Gastrocnemius medialis (tissue), 4 donors: ENCODE measurements at regions of chr1 and their contacts with region 1.

Region 1: GRCh38 chr1:206808615-206809014 is 36.3 kb upstream of the IL10 start:
- DNase-seq: peak in 1 of 2 donors; percentile 17
- ATAC-seq: peak; percentile 63 to 75
- H3K4me3 ChIP-seq: no peak overlapping the region
- H3K27ac ChIP-seq: no peak overlapping the region
- H3K4me1 ChIP-seq: no peaks in the 10 kb centered on the region
- H3K27me3 ChIP-seq: no peaks in the 10 kb centered on the region
- CTCF ChIP-seq: peak in 4 of 5 experiments; percentile 34 to 54 (median 45)
- POLR2A ChIP-seq: no peak

Region 2: GRCh38 chr1:206658264-206658980 is 150.2 kb before region 1 on chr1:
- in situ Hi-C with region 1: loop called in 3 of 4 experiments (anchors 10 to 25 kb)
- intact Hi-C with region 1: loop called (anchors 1 kb)
- DNase-seq: peak; percentile 43 to 82
- ATAC-seq: peak; percentile 46 to 77
- H3K4me3 ChIP-seq: peak overlapping the region; percentile 42 to 53 (median 44)
- H3K27ac ChIP-seq: peak overlapping the region; percentile 90 to 97 (median 94)
- H3K4me1 ChIP-seq: peaks cover 28 to 56% of the 10 kb centered on the region in 2 donors
- H3K27me3 ChIP-seq: no peaks in the 10 kb centered on the region
- CTCF ChIP-seq: peak; percentile 91 to 96 (median 95)
- POLR2A ChIP-seq: no peak

Region 3: DNA sequence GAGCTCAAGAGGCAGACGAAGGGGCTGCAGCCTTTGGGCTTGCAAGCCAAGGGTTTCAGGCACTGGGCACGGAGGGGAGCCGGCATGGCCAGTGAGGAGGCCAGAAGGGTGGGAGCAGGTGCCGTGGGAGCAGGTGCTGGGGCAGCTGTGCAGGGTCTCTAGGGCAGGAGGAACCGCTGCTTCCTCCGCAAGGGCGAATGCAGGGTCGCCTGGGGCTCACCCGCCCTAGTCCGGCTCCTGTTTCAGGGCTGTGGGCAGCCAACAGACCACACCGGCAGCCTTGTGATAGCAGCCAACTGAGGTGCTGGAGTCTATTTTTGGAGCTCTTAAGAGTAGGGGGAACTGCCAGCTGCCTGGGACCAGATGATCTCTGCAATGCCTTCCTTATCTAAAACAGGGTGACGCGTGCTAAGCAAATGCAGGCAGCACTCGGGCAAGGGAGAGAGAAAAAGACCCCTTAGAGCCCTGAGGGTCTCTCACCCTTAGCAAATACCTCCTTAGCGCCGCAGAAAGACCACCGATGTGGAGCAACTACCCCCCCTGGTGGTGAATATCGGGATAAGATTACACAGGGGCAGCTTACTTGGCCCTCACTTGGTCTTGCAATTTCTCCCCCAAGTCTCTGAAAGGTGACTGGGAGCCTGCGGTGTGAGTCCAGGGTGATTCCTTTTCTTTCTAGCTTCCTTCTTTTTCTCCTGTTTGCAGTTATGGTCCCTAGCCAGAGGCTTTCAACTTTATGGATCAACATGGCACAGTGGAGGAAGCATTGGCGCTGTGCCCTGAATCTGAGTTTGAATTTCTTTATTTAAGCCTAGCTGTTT is 144.6 kb before region 1 on chr1:
- in situ Hi-C with region 1: loop called in 3 of 4 experiments (anchors 10 to 25 kb)
- intact Hi-C with region 1: no loop called
- DNase-seq: peak; percentile 62 to 81
- ATAC-seq: peak; percentile 70 to 75
- H3K4me3 ChIP-seq: peak overlapping the region; percentile 35 to 46 (median 42)
- H3K27ac ChIP-seq: peak overlapping the region; percentile 83 to 91 (median 89)
- H3K4me1 ChIP-seq: peaks cover 34 to 51% of the 10 kb centered on the region in 2 donors
- H3K27me3 ChIP-seq: no peaks in the 10 kb centered on the region
- CTCF ChIP-seq: peak; percentile 90 to 97 (median 94)
- POLR2A ChIP-seq: peak in 1 of 2 donors; percentile 29

Region 4: DNA sequence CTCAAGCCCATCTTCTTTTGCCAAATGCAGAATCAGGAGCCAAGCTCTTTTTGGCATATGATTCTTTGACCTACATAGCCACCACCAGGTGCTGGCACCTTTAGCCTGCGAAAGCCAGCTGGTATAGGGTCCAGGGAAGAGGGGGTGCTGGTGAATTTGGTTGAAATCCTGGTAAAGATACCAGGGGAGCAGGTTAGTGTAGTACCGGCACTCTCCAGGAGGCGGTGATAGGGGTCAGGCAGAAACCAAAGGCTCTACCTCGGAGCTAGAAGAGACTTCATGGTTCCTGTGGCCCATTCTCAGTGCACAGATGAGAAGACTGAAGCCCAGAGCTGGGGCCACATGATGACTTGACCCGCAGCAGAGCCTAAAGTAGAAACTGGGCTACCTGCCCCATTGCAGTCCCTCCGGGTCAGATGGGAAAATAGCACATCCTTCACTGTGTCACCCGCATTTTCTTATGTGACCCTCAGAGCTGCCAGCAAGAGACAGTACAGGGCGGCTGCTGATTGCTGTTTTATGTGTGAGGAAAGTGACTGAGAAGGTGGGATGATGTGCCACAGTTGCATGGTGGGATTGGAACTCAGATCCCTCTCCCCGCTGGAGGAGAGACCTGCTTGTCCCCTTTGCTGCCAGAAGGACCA is 74.0 kb before region 1 on chr1:
- in situ Hi-C with region 1: loop called in 1 of 4 experiments (anchors 10 kb)
- intact Hi-C with region 1: loop called (anchors 2 kb)
- DNase-seq: no peak
- ATAC-seq: peak; percentile 24 to 30
- H3K4me3 ChIP-seq: no peak overlapping the region
- H3K27ac ChIP-seq: no peak overlapping the region
- H3K4me1 ChIP-seq: peaks cover 16 to 18% of the 10 kb centered on the region in 2 donors
- H3K27me3 ChIP-seq: no peaks in the 10 kb centered on the region
- CTCF ChIP-seq: peak; percentile 39 to 62 (median 54)
- POLR2A ChIP-seq: no peak